ENCODE measurements at regions of chr16 and their contacts with region 1.

Region 1: GRCh38 chr16:85347213-85347591 is 234.9 kb upstream of the CIBAR2 start:
- DNase-seq: no peak
- H3K4me3 ChIP-seq: no peak overlapping the region
- H3K4me3 Mint-ChIP-seq: no peak overlapping the region
- H3K27ac Mint-ChIP-seq: no peak overlapping the region
- H3K4me1 ChIP-seq: peaks cover 2% of the 10 kb centered on the region
- H3K4me1 Mint-ChIP-seq: no peaks in the 10 kb centered on the region
- H3K27me3 ChIP-seq: no peaks in the 10 kb centered on the region
- H3K27me3 Mint-ChIP-seq: no peaks in the 10 kb centered on the region
- CTCF ChIP-seq: peak; percentile 38 to 40

Region 2: DNA sequence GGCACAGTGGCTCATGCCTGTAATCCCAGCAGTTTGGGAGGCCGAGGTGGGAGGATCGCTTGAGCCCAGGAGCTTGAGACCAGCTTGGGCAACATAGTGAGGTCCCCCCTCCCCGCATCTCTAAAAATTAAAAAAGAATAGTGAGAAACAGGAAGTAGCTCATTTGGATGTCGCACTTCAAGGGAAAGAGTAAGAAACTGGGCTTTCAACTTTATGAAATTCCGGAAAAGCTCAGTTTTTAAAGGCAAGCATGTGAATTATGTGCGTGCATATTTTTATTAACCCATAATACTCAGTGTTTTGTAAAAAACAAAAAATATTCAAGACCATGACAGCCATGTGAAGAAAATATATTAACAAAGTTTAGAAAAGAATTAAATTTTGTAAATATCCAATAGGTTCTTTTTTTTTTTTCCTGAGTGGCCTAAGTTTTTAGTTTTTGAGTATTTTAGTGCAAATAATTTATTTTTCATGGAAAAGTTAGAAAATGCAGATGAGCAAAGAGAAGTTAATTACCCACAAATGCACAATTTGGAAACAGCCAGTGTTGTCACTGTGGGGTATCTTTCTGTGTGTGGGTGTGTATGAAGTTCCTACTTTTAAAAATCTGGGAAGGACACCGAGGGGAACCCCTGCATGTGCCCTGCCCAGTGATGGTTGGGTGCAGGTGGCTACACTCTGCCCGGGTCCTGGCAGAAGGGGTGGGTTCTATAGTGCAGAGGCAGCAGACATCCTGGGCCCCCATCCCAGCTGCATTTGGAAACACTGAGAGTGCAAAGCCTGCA is 274.9 kb before region 1 on chr16:
- CTCF ChIA-PET with region 1: interaction called, 10 read pairs
- POLR2A ChIA-PET with region 1: no interaction called
- intact Hi-C with region 1: no loop called
- DNase-seq: no peak
- H3K4me3 ChIP-seq: no peak overlapping the region
- H3K4me3 Mint-ChIP-seq: no peak overlapping the region
- H3K27ac Mint-ChIP-seq: no peak overlapping the region
- H3K4me1 ChIP-seq: peaks cover 4% of the 10 kb centered on the region
- H3K4me1 Mint-ChIP-seq: no peaks in the 10 kb centered on the region
- H3K27me3 ChIP-seq: no peaks in the 10 kb centered on the region
- H3K27me3 Mint-ChIP-seq: no peaks in the 10 kb centered on the region
- CTCF ChIP-seq: no peak

Region 3: DNA sequence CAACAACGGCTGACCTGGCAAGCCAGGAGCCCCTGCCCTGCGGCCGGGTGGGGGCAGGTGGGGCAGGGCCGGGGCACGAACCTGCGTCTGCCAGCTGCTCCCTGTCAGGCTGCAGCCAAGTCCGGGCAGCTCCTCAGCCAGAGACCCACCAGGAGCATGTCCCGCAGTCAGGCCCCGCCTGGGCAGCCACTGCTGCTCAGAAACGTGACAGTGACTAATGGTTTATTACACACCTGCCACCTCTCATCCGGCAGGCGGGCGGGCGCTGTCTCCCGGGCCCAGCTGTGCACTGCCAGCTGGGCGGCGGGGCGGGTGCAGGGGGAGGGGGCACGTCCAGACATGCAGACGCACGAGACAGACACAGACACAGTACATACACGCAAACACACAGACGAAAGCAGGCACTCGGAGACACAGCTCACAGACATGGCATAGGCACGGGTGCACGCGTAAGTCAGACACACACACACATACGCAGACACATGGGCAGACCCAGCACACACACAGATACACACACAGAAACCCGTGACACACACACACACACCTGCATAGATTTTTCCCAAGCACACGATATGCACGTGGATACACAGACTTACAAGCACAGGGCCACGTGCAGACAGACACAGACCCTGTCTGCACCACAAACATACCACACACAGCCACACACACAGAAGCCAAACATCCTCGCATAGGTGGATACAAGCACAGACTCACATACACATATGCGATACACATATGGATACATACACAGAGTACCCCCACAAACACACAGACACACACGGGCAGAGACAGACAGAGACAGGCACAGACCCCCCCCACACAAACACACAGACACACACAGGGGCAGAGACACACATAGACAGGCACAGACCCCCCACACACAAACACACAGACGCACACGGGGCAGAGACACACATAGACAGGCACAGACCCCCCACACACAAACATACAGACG is 13.4 kb after region 1 on chr16:
- CTCF ChIA-PET with region 1: no interaction called
- POLR2A ChIA-PET with region 1: no interaction called
- intact Hi-C with region 1: no loop called
- DNase-seq: no peak
- H3K4me3 ChIP-seq: no peak overlapping the region
- H3K4me3 Mint-ChIP-seq: no peak overlapping the region
- H3K27ac Mint-ChIP-seq: peak overlapping the region; percentile 2
- H3K4me1 ChIP-seq: peaks cover 34% of the 10 kb centered on the region
- H3K4me1 Mint-ChIP-seq: peaks cover 9% of the 10 kb centered on the region
- H3K27me3 ChIP-seq: no peaks in the 10 kb centered on the region
- H3K27me3 Mint-ChIP-seq: no peaks in the 10 kb centered on the region
- CTCF ChIP-seq: no peak